HAP-1 (cell line): ENCODE measurements at regions of chr17 and their contacts with region 1.

Region 1: DNA sequence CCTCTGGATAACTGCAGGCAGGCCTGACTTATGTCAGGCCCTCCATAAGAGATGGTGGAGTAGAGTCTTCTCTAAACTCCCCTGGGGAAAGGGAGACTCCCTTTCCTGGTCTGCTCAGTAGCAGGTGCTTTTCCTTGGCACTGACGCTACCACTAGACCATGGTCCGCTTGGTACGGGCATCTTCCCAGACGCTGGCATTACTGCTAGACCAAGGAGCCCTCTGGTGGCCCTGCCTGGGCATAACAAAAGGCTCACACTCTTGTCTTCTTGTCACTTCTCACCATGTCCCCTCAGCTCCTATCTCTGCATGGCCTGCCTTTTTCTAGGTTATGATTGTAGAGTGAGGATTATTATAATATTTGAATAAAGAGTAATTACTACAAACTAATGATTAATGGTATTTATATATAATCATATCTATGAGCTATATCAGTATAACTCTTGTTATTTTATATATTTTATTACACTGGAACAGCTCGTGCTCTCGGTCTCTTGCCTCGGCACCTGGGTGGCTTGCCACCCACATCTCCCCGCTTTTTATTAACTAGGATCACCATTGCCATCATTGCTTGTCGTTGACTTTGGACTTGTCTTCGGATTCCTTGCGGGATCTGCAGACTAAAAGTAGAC is 59.8 kb upstream of the ARL4D start:
- DNase-seq: peak; percentile 24 to 76
- H3K4me3 ChIP-seq: no peak overlapping the region
- H3K4me1 ChIP-seq: peaks cover 18% of the 10 kb centered on the region
- H3K27me3 ChIP-seq: no peaks in the 10 kb centered on the region

Region 2: GRCh38 chr17:42832974-42833766 is 505.8 kb before region 1 on chr17 and contains the start of gene PSME3:
- in situ Hi-C with region 1: loop called (anchors 25 kb)
- DNase-seq: peak; percentile 92
- H3K4me3 ChIP-seq: peak within 1 kb of the TSS; percentile 76
- H3K4me1 ChIP-seq: peaks cover 7% of the 10 kb centered on the region
- H3K27me3 ChIP-seq: no peaks in the 10 kb centered on the region

Region 3: GRCh38 chr17:43308999-43309398 is 30.0 kb before region 1 on chr17:
- in situ Hi-C with region 1: no loop called
- DNase-seq: no peak
- H3K4me3 ChIP-seq: no peak overlapping the region
- H3K4me1 ChIP-seq: no peaks in the 10 kb centered on the region
- H3K27me3 ChIP-seq: no peaks in the 10 kb centered on the region

Region 4: GRCh38 chr17:43546319-43547188 is 207.6 kb after region 1 on chr17 and contains the start of gene ETV4:
- in situ Hi-C with region 1: no loop called
- DNase-seq: peak; percentile 85 to 97
- H3K4me3 ChIP-seq: peak within 1 kb of the TSS; percentile 40
- H3K4me1 ChIP-seq: peaks cover 21% of the 10 kb centered on the region
- H3K27me3 ChIP-seq: peaks cover 10% of the 10 kb centered on the region